IMR-90 (cell line): ENCODE measurements at regions of chr4 and their contacts with region 1.

Region 1: DNA sequence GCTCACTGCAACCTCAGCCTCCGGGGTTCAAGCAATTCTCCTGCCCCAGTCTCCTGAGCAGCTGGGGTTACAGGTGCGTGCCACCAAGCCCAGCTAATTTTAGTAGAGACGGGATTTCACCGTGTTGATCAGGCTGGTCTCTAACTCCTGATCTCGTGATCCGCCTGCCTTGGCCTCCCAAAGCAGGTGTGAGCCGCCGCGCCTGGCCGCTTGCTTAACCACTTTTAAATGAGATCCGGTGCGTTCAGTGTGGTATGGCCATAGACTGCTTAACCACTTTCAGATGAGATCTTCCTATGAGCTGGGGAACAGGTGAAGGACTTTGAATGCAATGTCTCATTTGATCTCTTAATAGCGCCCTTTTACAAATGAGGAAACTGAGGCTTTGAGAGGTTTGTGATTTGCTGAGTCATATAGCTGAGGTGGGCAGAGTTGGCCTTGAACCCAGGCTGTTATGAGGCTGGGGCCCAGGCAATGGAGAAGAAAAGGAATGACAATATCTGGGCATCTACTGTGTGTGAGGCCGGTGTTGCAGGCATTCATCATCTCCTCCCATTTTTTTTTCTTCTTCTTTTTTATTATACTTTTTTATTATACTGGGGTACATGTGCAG is 41.9 kb upstream of the NSG1 start:
- DNase-seq: no peak
- ATAC-seq: no peak
- H3K4me3 ChIP-seq: no peak overlapping the region
- H3K27ac ChIP-seq: no peak overlapping the region
- H3K4me1 ChIP-seq: no peaks in the 10 kb centered on the region
- H3K27me3 ChIP-seq: peaks cover 26% of the 10 kb centered on the region
- CTCF ChIP-seq: no peak
- POLR2A ChIP-seq: no peak
- RAD21 ChIP-seq: no peak

Region 2: DNA sequence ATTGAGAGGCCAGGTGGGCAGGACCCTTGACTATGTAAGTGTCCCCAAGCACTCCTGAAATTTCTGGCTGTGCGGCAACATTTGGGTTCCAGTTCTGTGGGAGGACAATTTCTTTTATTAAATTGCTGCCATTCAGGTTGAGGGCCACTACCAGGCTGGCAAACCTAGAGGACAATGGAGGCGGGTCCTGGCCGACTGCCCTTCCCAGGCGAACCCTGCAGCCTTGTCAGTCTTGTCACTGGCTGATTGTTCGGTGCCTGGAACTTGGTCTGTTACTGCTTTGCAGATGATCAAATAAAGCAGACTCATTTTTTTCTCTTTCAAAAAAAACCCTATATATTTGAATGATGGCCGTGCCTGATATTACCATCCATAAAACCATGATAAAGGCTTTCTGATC is 90.4 kb before region 1 on chr4:
- CTCF ChIA-PET with region 1: interaction called, 7 read pairs
- POLR2A ChIA-PET with region 1: no interaction called
- dilution Hi-C with region 1: no loop called
- in situ Hi-C with region 1: loop called (anchors 5 kb)
- intact Hi-C with region 1: no loop called
- DNase-seq: no peak
- ATAC-seq: no peak
- H3K4me3 ChIP-seq: no peak overlapping the region
- H3K27ac ChIP-seq: no peak overlapping the region
- H3K4me1 ChIP-seq: peaks cover 1% of the 10 kb centered on the region; the same call in 1 of the 2 replicates
- H3K27me3 ChIP-seq: peaks cover 22% of the 10 kb centered on the region
- CTCF ChIP-seq: no peak
- POLR2A ChIP-seq: no peak
- RAD21 ChIP-seq: no peak

Region 3: GRCh38 chr4:4625478-4625877 is 280.5 kb after region 1 on chr4:
- CTCF ChIA-PET with region 1: no interaction called
- POLR2A ChIA-PET with region 1: no interaction called
- dilution Hi-C with region 1: no loop called
- in situ Hi-C with region 1: no loop called
- intact Hi-C with region 1: no loop called
- DNase-seq: peak; percentile 84
- ATAC-seq: peak; percentile 82
- H3K4me3 ChIP-seq: no peak overlapping the region
- H3K27ac ChIP-seq: no peak overlapping the region
- H3K4me1 ChIP-seq: peaks cover 1% of the 10 kb centered on the region; the same call in 1 of the 2 replicates
- H3K27me3 ChIP-seq: no peaks in the 10 kb centered on the region
- CTCF ChIP-seq: no peak
- POLR2A ChIP-seq: no peak
- RAD21 ChIP-seq: no peak